ENCODE measurements at regions of chr21 and their contacts with region 1.

Region 1: DNA sequence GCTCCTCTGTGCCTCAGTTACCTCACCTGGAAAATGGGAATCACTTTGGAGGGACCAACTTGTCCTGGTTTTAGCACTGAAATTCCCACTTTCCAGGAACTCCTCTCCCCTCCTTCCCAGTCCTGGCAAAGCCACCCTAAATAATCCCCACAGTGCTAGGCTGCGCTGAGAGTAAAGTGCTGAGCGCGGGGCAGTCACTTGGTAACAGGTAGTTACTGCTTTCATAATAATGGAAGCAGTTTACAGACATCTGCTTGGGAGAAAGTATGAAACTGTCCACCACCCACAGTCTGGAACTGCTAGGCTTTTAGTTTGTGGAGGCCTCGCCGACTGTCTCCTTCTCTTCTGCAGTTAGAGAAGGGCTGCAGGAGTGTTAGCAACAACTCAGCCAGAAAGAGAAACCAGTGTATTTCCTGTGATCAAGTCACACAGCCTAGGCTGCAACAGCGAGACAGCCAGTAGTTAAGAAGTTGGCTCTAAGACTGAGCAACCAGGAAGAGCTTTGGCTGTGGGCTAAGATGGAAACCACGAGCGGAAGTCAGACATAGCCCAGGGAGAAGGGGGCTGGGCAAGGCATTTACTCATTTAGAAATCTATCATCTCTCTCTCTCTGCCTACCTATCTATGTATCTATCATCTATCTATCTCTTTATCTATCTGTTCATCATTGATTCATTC is 30.8 kb upstream of the ABCG1 start:
- DNase-seq: peak; percentile 81
- H3K4me3 Mint-ChIP-seq: peak overlapping the region; percentile 68
- H3K27ac Mint-ChIP-seq: peak overlapping the region; percentile 89
- H3K4me1 Mint-ChIP-seq: peaks cover 70% of the 10 kb centered on the region
- H3K27me3 Mint-ChIP-seq: no peaks in the 10 kb centered on the region

Region 2: GRCh38 chr21:42145569-42146272 is 42.4 kb before region 1 on chr21:
- intact Hi-C with region 1: loop called (anchors 5 kb)
- DNase-seq: peak; percentile 55
- H3K4me3 Mint-ChIP-seq: no peak overlapping the region
- H3K27ac Mint-ChIP-seq: peak overlapping the region; percentile 25
- H3K4me1 Mint-ChIP-seq: peaks cover 10% of the 10 kb centered on the region
- H3K27me3 Mint-ChIP-seq: peaks cover 2% of the 10 kb centered on the region

Region 3: DNA sequence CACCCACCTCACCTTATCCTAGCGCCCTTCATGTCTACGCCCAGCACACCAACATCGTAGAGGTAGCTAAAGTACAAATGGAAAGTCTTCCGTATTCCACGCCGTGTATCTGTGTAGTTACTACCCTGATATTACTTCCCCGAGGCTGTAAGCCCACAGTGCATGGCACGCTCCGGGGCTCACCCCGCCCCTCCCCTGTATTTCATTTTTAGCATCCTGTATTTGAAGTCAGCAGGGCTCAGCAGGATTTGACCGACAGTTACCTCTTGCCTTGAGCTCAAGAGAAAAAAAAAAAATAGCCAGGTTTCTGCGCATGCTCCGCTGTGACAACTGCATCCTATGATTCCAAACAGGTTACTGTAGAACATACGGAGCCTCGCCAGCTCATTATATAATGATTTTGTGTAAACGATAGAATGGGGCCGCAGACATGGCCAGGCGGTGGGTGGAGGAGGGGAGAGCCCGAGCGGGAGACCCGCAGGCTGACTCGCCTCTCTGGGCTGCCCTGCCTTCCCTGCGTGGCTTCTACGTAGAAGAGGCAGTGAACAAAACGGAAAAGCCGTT is 32.1 kb after region 1 on chr21:
- intact Hi-C with region 1: loop called (anchors 1 kb)
- DNase-seq: peak; percentile 78
- H3K4me3 Mint-ChIP-seq: peak overlapping the region; percentile 100
- H3K27ac Mint-ChIP-seq: peak overlapping the region; percentile 100
- H3K4me1 Mint-ChIP-seq: peaks cover 36% of the 10 kb centered on the region
- H3K27me3 Mint-ChIP-seq: peaks cover 3% of the 10 kb centered on the region

Region 4: DNA sequence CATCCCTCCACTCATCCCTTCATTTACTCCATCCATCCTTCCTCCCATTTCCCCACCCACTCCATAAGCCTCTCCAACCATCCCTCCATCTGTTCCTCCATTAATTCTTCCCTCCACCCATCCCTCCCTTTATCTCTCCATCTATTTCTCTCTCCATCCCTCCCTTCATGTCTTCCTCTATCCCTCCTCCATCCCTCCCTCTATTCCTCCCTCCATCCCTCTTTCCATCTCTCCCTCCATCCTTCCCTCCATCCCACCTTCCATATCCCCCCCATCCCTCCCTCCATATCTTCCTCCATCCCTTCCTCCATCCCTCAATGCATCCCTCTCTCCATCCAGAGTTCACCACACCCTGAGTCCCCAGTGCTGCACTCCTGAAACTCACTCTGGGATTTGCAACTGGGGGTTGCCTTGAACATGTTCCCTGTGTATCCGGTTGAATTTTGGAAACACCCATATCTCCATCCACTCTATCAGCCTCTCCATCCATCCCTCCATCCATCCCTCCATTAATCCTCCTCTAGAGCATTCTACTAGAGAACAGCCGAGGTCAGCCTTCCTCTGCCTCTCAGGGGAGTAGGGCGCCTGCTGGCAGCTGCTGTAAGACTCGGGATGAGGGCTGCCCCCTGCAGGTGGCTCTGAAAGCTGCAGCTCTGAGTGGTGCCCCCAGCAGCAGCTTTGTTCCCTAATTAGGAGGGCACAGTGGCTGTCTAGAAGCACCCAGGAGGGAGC is 70.2 kb after region 1 on chr21:
- intact Hi-C with region 1: loop called (anchors 1 kb)
- DNase-seq: peak; percentile 63
- H3K4me3 Mint-ChIP-seq: no peak overlapping the region
- H3K27ac Mint-ChIP-seq: no peak overlapping the region
- H3K4me1 Mint-ChIP-seq: peaks cover 6% of the 10 kb centered on the region
- H3K27me3 Mint-ChIP-seq: peaks cover 4% of the 10 kb centered on the region